ENCODE measurements at regions of chr17 and their contacts with region 1.

Region 1: GRCh38 chr17:81401723-81402529 is 6.7 kb downstream of the BAHCC1 start:
- DNase-seq: peak; percentile 62
- H3K4me3 ChIP-seq: no peak overlapping the region
- H3K27ac ChIP-seq: peak overlapping the region; percentile 88
- H3K4me1 ChIP-seq: peaks cover 27% of the 10 kb centered on the region
- H3K27me3 ChIP-seq: no peaks in the 10 kb centered on the region
- CTCF ChIP-seq: peak; percentile 15

Region 2: GRCh38 chr17:81279278-81280275 is 122.3 kb before region 1 on chr17:
- intact Hi-C with region 1: no loop called
- DNase-seq: no peak
- H3K4me3 ChIP-seq: no peak overlapping the region
- H3K27ac ChIP-seq: no peak overlapping the region
- H3K4me1 ChIP-seq: peaks cover 8% of the 10 kb centered on the region
- H3K27me3 ChIP-seq: no peaks in the 10 kb centered on the region
- CTCF ChIP-seq: no peak

Region 3: DNA sequence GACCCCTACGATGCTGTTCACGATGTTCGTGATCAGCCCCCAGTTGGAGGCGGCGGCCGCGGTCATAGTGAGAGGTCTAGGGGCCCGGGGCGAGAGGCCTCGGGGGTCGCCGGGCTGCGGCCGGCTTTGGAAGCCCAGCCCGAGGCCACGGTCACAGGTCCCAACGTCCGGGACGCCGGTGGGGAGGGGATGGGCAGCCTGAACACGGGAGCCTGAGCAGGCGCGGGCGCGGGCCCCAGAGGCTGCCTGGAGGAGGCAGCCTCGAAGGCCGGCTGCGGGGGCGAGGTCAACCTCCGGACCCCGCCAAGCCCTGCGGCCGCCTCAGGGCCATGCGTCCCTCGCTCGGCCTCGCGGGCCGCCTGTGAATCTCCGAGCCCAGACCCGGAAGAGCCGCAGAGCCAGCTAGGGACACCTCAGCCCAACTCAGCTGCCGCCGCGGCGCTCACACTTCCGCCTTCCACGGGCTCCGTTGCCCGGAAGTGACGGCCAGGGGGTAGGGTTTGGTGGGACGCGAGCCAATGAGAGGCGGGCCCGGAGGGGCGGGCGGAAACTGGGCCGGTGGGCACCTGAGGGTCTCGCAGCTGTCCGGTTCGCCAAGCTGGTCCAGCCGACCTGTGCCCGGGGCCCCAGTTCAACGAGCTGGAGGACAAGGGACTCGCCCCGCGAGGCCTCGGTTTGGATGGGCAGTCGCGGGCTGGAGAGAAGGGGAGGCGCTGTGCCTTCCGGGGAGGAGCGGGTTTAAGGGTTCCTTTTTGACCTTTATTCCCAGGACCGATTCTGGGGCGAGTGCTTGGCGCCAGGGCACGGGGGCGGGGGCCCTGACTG is 106.9 kb before region 1 on chr17 and contains the start of gene SLC38A10:
- intact Hi-C with region 1: loop called (anchors 5 kb)
- DNase-seq: peak; percentile 96
- H3K4me3 ChIP-seq: peak within 1 kb of the TSS; percentile 77
- H3K27ac ChIP-seq: peak within 1 kb of the TSS; percentile 90
- H3K4me1 ChIP-seq: peaks cover 4% of the 10 kb centered on the region
- H3K27me3 ChIP-seq: no peaks in the 10 kb centered on the region
- CTCF ChIP-seq: no peak
- total RNA-seq, gene SLC38A10: 67.5 to 139 TPM

Region 4: DNA sequence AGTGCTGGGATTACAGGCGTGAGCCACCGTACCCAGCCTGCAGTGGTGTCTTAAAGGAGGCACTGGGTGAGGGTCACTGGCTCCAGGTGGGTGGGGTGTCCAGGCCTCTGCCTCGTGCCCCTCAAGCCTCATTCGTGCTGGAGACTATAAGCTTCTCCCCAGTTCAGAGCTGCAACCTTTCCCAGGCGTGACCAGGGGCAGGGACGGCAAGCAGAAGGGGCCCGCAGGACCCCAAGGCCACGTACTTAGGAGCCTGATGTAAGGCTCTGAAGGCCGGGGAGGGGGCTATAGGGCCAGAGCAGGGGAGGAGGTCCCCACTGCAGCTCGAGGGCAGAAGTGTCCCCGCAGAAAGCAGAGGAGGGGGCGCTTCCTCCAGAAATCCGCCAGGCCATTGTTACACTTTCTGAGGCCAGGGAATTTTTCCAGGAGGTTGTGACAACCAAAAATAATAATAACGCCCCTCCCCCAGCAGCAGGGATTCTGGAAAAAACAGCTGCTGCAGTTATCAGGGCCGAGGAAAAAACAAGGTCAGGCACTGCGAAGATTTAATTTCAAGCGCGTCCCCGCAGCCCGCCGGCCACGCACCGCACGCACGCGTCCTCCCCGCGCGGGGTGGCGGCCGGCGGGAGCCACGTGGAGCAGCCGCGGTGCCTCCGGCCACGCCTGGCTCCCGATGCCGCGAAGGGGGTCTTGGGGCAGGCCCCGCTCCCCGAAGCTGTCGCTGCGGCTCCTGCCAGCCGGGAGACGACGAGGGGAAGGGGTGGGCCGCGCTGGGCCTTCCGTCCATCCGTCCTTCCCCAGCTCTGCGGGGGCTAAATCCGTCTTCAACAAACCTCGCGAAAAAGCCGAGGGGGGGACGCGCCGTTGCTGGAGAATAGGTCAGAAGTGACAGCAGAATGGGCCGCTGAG is 61.1 kb before region 1 on chr17:
- intact Hi-C with region 1: no loop called
- DNase-seq: no peak
- H3K4me3 ChIP-seq: peak overlapping the region; percentile 44
- H3K27ac ChIP-seq: peak overlapping the region; percentile 97
- H3K4me1 ChIP-seq: peaks cover 28% of the 10 kb centered on the region
- H3K27me3 ChIP-seq: peaks cover 8% of the 10 kb centered on the region
- CTCF ChIP-seq: no peak

Measured in colonic mucosa (tissue), 4 donors.